ENCODE measurements at regions of chr12 and their contacts with region 1.

Region 1: DNA sequence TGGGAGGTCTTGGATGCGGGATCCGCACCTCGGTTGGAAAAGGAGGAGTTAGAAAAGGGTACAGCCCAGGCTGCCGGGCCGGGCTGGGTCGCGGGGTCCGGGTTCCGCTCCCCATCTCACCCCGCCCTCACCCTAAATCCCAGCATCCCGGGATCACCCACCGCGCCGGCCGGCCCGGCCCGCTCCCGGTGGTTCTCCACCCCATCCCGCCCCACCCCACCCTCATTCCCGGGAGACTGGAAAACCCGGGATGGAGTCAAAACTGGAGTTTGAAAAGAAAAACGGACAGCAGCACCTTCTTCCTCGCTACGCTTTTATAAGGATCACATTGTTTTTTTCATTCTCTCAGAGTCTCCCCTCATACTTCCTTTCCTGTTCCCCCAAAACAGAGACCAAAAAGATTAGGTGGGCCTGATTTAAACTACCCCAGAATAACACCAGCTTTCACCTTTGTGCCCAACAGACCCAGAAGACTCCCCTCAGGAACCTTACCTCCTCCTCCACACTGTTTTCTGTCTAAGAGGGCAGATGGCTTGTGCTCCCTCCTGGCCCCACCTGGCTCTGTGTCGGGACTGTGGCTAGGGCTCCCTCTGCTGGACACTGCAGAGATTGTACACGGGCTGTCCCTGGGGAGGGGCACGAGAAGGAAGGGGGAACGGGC is 2.8 kb downstream of the GLI1 start:
- DNase-seq: peak; percentile 95
- H3K4me3 ChIP-seq: peak overlapping the region; percentile 60 to 90
- H3K27ac ChIP-seq: peak overlapping the region; percentile 48 to 61; a peak in 3 of 4 replicates
- H3K4me1 ChIP-seq: peaks cover 0 to 20% of the 10 kb centered on the region in 2 experiments; a peak in 2 of 4 replicates
- H3K27me3 ChIP-seq: peaks cover 13% of the 10 kb centered on the region; the same call in 1 of the 2 replicates
- CTCF ChIP-seq: peak; percentile 98
- EP300 ChIP-seq: no peak
- RAD21 ChIP-seq: peak; percentile 67

Region 2: GRCh38 chr12:57088459-57089248 is 373.7 kb before region 1 on chr12 and contains the start of gene NAB2:
- CTCF ChIA-PET with region 1: no interaction called
- POLR2A ChIA-PET with region 1: no interaction called
- DNase-seq: peak; percentile 96
- H3K4me3 ChIP-seq: peak within 1 kb of the TSS; percentile 77 to 90
- H3K27ac ChIP-seq: peak within 1 kb of the TSS; percentile 96 to 98
- H3K4me1 ChIP-seq: peaks cover 22 to 23% of the 10 kb centered on the region in 2 experiments; a peak in 2 of 4 replicates
- H3K27me3 ChIP-seq: no peaks in the 10 kb centered on the region
- CTCF ChIP-seq: no peak
- EP300 ChIP-seq: no peak
- RAD21 ChIP-seq: no peak
- polyA plus RNA-seq, gene NAB2: 23.7 and 24.9 TPM in 2 replicates

Region 3: GRCh38 chr12:57213058-57213715 is 249.2 kb before region 1 on chr12:
- CTCF ChIA-PET with region 1: interaction called, 37 read pairs
- POLR2A ChIA-PET with region 1: no interaction called
- DNase-seq: peak; percentile 96
- H3K4me3 ChIP-seq: no peak overlapping the region; a peak in 1 of 4 replicates
- H3K27ac ChIP-seq: no peak overlapping the region
- H3K4me1 ChIP-seq: peaks cover 0 to 27% of the 10 kb centered on the region in 2 experiments; a peak in 1 of 4 replicates
- H3K27me3 ChIP-seq: peaks cover 14% of the 10 kb centered on the region
- CTCF ChIP-seq: peak; percentile 92
- EP300 ChIP-seq: no peak
- RAD21 ChIP-seq: peak; percentile 81

Region 4: GRCh38 chr12:57248934-57249742 is 213.2 kb before region 1 on chr12:
- CTCF ChIA-PET with region 1: interaction called, 71 read pairs
- POLR2A ChIA-PET with region 1: interaction called, 3 read pairs
- DNase-seq: no peak
- H3K4me3 ChIP-seq: no peak overlapping the region
- H3K27ac ChIP-seq: no peak overlapping the region
- H3K4me1 ChIP-seq: no peaks in the 10 kb centered on the region; a peak in 1 of 4 replicates
- H3K27me3 ChIP-seq: no peaks in the 10 kb centered on the region
- CTCF ChIP-seq: no peak
- EP300 ChIP-seq: no peak
- RAD21 ChIP-seq: no peak

Region 5: DNA sequence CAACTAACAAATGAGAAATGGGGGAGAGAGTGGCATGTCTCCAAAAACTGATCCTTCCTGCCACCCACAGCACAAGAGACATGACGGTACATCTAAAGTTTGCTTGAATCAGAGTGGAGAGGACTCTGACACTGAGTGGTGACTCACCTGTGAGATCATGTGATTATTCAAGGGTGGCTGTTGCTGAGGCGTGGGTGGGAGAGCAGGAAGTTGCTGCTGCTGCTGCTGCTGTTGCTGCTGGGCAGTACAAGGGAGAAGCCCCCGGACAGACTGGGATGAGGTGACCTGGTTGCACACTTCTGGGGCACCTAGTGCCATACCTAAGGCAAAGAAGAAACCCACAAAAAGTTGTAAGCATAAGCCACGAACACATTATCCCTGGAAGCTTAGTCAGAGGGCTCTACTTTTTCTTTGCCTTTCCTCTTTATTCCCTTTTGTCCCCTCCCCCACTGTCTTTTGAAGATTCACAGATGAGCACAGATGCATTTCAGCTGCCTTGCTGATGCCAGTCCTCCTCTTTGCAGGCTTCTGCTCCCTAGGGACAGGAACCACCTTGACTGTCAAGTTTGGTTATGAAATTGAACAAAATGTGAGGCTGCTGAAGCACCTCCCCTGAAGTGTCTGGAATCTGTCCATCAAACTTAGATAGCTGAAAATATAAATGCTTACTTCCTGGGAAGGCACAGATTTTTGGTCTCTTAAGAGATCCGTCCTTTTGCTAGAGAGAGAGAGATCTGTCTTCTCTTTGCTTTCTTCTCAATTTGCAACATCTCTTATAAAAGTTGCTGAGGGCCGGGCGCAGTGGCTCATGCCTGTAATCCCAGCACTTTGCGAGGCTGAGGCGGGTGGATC is 181.9 kb before region 1 on chr12:
- CTCF ChIA-PET with region 1: interaction called, 11 read pairs
- POLR2A ChIA-PET with region 1: no interaction called
- DNase-seq: no peak
- H3K4me3 ChIP-seq: peak overlapping the region in 1 of 2 experiments; percentile 30; a peak in 2 of 4 replicates
- H3K27ac ChIP-seq: peak overlapping the region; percentile 32 to 84
- H3K4me1 ChIP-seq: peaks cover 2 to 13% of the 10 kb centered on the region in 2 experiments; a peak in 2 of 4 replicates
- H3K27me3 ChIP-seq: no peaks in the 10 kb centered on the region
- CTCF ChIP-seq: no peak
- EP300 ChIP-seq: peak in 1 of 2 experiments; percentile 45; a peak in 1 of 4 replicates
- RAD21 ChIP-seq: no peak

Region 6: GRCh38 chr12:57441846-57442427 is 20.4 kb before region 1 on chr12:
- CTCF ChIA-PET with region 1: interaction called, 10 read pairs
- POLR2A ChIA-PET with region 1: no interaction called
- DNase-seq: no peak
- H3K4me3 ChIP-seq: no peak overlapping the region
- H3K27ac ChIP-seq: no peak overlapping the region
- H3K4me1 ChIP-seq: no peaks in the 10 kb centered on the region
- H3K27me3 ChIP-seq: no peaks in the 10 kb centered on the region
- CTCF ChIP-seq: no peak
- EP300 ChIP-seq: no peak
- RAD21 ChIP-seq: no peak

Region 7: DNA sequence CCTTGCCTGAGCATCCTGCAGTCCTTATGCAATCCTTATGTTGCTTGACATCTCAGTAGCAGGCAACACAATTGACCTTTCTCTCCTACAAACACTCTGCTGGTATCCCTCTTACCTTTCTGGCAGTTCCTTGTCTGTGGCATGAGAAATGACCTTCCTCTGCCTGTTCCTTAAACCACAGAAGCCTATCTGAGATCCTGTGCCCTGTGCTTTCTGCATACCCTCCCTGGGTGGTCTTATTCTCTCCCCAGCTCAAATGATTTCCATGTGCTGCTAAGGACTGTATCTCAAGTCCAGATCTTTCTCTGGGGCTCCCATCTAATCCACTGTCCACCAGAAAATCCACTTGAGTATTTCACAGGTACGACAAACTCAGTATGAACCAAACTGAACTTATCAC is 19.3 kb after region 1 on chr12:
- CTCF ChIA-PET with region 1: interaction called, 67 read pairs
- POLR2A ChIA-PET with region 1: no interaction called
- DNase-seq: no peak
- H3K4me3 ChIP-seq: no peak overlapping the region
- H3K27ac ChIP-seq: no peak overlapping the region
- H3K4me1 ChIP-seq: no peaks in the 10 kb centered on the region; a peak in 1 of 4 replicates
- H3K27me3 ChIP-seq: peaks cover under 1% of the 10 kb centered on the region; the same call in 1 of the 2 replicates
- CTCF ChIP-seq: no peak
- EP300 ChIP-seq: no peak
- RAD21 ChIP-seq: no peak

Region 8: DNA sequence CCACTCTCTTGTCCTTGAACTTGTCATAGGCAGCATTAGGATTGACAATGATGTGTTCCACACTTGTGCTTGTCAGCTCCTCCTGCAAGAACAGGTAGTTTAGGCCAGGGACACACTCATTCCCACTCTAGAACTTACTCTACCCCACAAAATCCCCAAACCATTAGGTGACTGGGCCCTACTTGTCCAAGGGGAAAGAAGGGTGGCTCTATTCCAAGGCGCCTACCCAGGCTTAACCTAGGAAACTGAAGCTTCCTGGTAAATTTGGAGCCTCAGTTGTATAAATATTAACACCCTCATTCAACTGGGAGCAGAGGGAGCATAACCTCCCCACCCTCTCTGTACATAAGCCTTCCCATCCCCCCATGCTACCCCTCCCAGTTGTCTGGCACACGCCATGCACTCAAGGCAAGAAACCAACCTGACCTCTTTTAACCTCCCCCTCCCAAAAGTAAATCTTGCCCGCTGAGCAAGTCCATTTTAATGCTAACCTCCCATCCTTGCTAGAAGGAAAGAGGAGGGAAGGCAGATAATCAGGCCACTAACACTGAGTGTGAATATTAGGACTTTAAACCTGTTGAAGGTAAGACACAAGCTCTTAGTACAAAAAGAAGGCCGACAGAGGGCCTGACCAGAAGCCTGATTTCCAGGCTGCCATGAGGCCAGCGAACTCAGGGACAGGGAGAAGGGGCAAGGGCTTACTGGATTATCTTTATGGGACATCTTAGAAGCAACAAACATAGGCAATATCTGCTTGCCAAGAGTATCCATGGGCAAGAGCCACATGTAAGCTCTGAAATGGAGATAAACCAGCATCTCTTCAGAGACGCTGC is 73.6 kb after region 1 on chr12:
- CTCF ChIA-PET with region 1: no interaction called
- POLR2A ChIA-PET with region 1: no interaction called
- DNase-seq: no peak
- H3K4me3 ChIP-seq: no peak overlapping the region
- H3K27ac ChIP-seq: no peak overlapping the region
- H3K4me1 ChIP-seq: no peaks in the 10 kb centered on the region
- H3K27me3 ChIP-seq: no peaks in the 10 kb centered on the region
- CTCF ChIP-seq: no peak
- EP300 ChIP-seq: no peak
- RAD21 ChIP-seq: no peak